HEK293 (cell line): ENCODE measurements at regions of chr1 and their contacts with region 1.

Region 1: GRCh38 chr1:115275212-115275611 is 62.8 kb downstream of the NGF start:
- H3K4me3 ChIP-seq: no peak overlapping the region
- H3K27ac ChIP-seq: no peak overlapping the region
- H3K4me1 ChIP-seq: no peaks in the 10 kb centered on the region
- CTCF ChIP-seq: no peak

Region 2: GRCh38 chr1:114956564-114956963 is 318.6 kb before region 1 on chr1:
- CTCF ChIA-PET with region 1: no interaction called
- POLR2A ChIA-PET with region 1: no interaction called
- H3K4me3 ChIP-seq: no peak overlapping the region
- H3K27ac ChIP-seq: no peak overlapping the region
- H3K4me1 ChIP-seq: no peaks in the 10 kb centered on the region
- CTCF ChIP-seq: peak; percentile 85

Region 3: DNA sequence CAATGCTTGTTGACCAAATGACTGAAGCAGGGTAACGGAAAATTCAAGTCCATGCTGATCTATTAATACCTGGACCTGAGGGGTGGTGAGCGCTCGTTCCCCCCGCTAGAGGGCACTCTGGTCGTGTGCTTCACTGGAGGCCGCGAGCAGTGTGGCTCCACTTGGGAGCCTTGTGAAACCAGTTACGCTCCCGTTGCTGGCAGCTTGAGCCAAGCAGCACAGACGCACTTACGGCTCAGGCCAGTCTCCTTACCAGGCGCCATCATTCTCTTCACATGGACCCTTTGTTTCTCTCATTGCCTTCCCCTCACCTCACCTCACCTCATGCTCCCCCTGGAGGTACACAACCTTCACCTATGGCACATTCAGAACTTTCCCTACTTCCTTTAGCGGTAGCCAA is 136.2 kb before region 1 on chr1:
- CTCF ChIA-PET with region 1: interaction called, 11 read pairs
- POLR2A ChIA-PET with region 1: no interaction called
- H3K4me3 ChIP-seq: no peak overlapping the region
- H3K27ac ChIP-seq: no peak overlapping the region
- H3K4me1 ChIP-seq: no peaks in the 10 kb centered on the region
- CTCF ChIP-seq: peak; percentile 91

Region 4: DNA sequence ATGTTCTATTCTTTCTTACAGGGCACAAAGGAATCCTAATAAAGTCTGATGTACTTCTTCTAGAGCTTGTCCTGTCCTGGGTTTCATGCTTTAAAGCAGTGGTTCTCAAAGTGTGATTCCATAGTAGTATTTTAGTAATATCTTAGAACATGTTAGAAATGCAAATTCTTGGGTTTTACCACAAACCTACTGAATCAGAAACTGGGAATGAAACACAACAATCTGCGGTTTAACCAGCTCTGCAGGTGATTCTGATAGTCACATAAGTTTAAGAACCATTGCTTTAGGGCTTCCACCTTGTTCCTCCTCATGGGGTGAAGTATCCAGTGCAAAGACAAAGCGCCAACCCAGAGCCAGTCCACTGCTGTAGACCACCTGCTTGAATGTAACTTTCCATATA is 21.8 kb after region 1 on chr1:
- CTCF ChIA-PET with region 1: interaction called, 14 read pairs
- POLR2A ChIA-PET with region 1: no interaction called
- H3K4me3 ChIP-seq: no peak overlapping the region
- H3K27ac ChIP-seq: no peak overlapping the region
- H3K4me1 ChIP-seq: peaks cover 8% of the 10 kb centered on the region
- CTCF ChIP-seq: no peak

Region 5: DNA sequence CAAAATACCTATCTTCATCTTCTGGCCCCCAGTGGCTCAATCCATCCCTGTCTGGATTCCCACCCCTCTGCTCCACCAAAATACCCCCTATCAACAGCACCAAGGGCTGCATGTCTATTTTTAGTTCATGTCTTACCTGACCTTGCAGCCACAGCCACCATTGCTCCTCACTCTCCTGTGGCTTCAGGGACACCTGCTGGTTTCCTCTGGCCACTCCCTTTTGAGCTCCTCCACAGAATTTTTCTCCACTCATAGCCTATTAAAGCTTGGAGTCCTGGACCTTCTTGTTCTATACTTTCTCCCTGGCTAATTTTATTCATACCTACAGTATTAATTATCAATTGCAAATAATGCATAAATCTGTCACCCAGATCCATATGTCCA is 188.1 kb after region 1 on chr1:
- CTCF ChIA-PET with region 1: interaction called, 27 read pairs
- POLR2A ChIA-PET with region 1: no interaction called
- H3K4me3 ChIP-seq: no peak overlapping the region
- H3K27ac ChIP-seq: no peak overlapping the region
- H3K4me1 ChIP-seq: peaks cover 7% of the 10 kb centered on the region
- CTCF ChIP-seq: peak; percentile 64